Activated T-helper 1 cell treated with anti-CD3 and anti-CD28 coated beads, Interleukin-12 subunit alpha, Interleukin-12 subunit beta, Interleukin-2, Interleukin-4 antibody, amounts not matched to agents 30 ng/mL and 10 ng/mL and 1 ng/mL, durations not matched to agents 14 hours and 24 hours and 36 hours (primary cell): ENCODE measurements at regions of chr11 and their contacts with region 1.

Region 1: DNA sequence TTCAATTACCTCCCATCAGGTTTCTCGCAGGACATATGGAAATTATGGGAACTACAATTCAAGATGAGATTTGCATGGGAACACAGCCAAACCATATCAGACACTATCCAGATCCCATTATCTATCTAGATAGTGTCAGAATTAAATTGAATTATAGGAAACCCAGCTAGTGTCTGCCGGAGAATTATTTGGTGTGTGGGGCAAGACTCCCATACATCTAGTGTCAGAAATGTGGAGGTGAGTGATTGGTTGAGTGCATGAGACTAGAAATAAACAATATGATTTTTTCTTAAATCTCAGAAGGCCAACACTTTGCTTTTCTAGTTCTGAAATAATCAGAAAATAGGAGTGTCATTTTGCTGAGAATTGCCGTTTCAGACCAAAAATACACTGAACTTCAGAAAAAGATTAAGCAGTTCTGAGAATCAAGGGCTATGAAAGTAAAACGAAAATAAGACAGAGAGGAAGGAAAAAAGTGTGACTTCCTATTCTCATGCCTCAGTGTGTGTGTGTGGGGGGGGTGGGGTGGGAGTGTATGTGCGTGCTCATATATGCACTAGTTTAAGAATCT is 21.3 kb downstream of the CASP12 start:
- DNase-seq: no peak
- H3K4me3 Mint-ChIP-seq: peak overlapping the region; percentile 50
- H3K27ac Mint-ChIP-seq: peak overlapping the region; percentile 66
- H3K4me1 Mint-ChIP-seq: peaks cover 37% of the 10 kb centered on the region
- H3K27me3 Mint-ChIP-seq: peaks cover 3% of the 10 kb centered on the region

Region 2: GRCh38 chr11:104799251-104799650 is 77.7 kb before region 1 on chr11:
- intact Hi-C with region 1: loop called (anchors 2 kb)
- DNase-seq: no peak
- H3K4me3 Mint-ChIP-seq: peak overlapping the region; percentile 78
- H3K27ac Mint-ChIP-seq: peak overlapping the region; percentile 73
- H3K4me1 Mint-ChIP-seq: peaks cover 35% of the 10 kb centered on the region
- H3K27me3 Mint-ChIP-seq: no peaks in the 10 kb centered on the region

Region 3: GRCh38 chr11:105034813-105035620 is 158.1 kb after region 1 on chr11 and contains the start of gene CASP1:
- intact Hi-C with region 1: no loop called
- DNase-seq: peak; percentile 31
- H3K4me3 Mint-ChIP-seq: peak within 1 kb of the TSS; percentile 93
- H3K27ac Mint-ChIP-seq: peak within 1 kb of the TSS; percentile 94
- H3K4me1 Mint-ChIP-seq: peaks cover 32% of the 10 kb centered on the region
- H3K27me3 Mint-ChIP-seq: no peaks in the 10 kb centered on the region
- total RNA-seq, gene CASP1: 21.1 and 21.4 TPM in 2 replicates